ENCODE measurements at regions of chr11 and their contacts with region 1.

Region 1: DNA sequence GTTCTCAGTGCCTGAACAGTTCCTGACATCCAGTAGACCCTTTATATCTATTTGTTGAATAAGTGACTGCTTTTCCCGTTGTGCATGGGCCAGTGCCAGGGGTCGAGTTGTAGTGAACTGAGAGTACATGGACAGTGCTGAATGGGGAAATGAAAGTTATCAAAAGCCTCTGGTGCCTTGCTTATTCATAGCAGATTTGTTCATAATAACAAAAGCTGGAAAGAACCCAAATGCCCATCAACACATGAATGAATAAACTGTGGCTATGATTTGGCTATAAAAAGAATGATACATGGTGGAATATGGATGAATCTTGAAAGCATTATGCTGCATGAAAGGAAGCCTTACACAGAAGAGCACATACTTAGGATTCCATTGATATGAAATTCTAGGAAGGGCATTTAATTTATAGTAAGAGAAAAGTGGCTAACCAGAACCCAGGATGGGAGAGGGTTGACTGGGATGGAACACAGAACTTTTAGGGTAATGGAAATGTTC is 42.6 kb downstream of the PACS1 start:
- DNase-seq: peak; percentile 66
- H3K4me3 ChIP-seq: no peak overlapping the region
- H3K27ac ChIP-seq: peak overlapping the region; percentile 59
- H3K4me1 ChIP-seq: peaks cover 22% of the 10 kb centered on the region
- H3K27me3 ChIP-seq: no peaks in the 10 kb centered on the region
- CTCF ChIP-seq: no peak

Region 2: GRCh38 chr11:66081505-66081904 is 31.1 kb before region 1 on chr11:
- CTCF ChIA-PET with region 1: no interaction called
- dilution Hi-C with region 1: loop called (anchors 5 kb)
- in situ Hi-C with region 1: no loop called
- intact Hi-C with region 1: loop called (anchors 2 kb)
- DNase-seq: peak; percentile 77
- H3K4me3 ChIP-seq: no peak overlapping the region
- H3K27ac ChIP-seq: peak overlapping the region; percentile 43
- H3K4me1 ChIP-seq: peaks cover 21% of the 10 kb centered on the region
- H3K27me3 ChIP-seq: no peaks in the 10 kb centered on the region
- CTCF ChIP-seq: no peak